Gastrocnemius medialis (tissue), 4 donors: ENCODE measurements at regions of chr1 and their contacts with region 1.

Region 1: GRCh38 chr1:165827268-165828102 is at the start of gene UCK2:
- DNase-seq: peak; percentile 72 to 81
- ATAC-seq: peak; percentile 82 to 86
- H3K4me3 ChIP-seq: peak within 1 kb of the TSS; percentile 78 to 99 (median 85)
- H3K27ac ChIP-seq: peak within 1 kb of the TSS; percentile 87 to 97 (median 96)
- H3K4me1 ChIP-seq: peaks cover 8 to 9% of the 10 kb centered on the region in 2 donors
- H3K27me3 ChIP-seq: no peaks in the 10 kb centered on the region
- CTCF ChIP-seq: peak in 4 of 5 experiments; percentile 15 to 45 (median 30)
- POLR2A ChIP-seq: peak; percentile 86 to 91
- total RNA-seq, gene UCK2: 14.0 to 32.7 (median 24.1) TPM

Region 2: GRCh38 chr1:165383067-165383466 is 444.4 kb before region 1 on chr1:
- in situ Hi-C with region 1: no loop called
- intact Hi-C with region 1: loop called (anchors 10 kb)
- DNase-seq: peak; percentile 88 to 90
- ATAC-seq: peak; percentile 98 to 99
- H3K4me3 ChIP-seq: no peak overlapping the region
- H3K27ac ChIP-seq: peak overlapping the region; percentile 59 to 73 (median 66)
- H3K4me1 ChIP-seq: peaks cover 8 to 12% of the 10 kb centered on the region in 2 donors
- H3K27me3 ChIP-seq: no peaks in the 10 kb centered on the region
- CTCF ChIP-seq: no peak
- POLR2A ChIP-seq: no peak

Region 3: GRCh38 chr1:165697881-165698760 is 129.4 kb before region 1 on chr1 and contains the start of gene ALDH9A1:
- in situ Hi-C with region 1: no loop called
- intact Hi-C with region 1: loop called (anchors 5 kb)
- DNase-seq: peak; percentile 68 to 87
- ATAC-seq: peak; percentile 90 to 92
- H3K4me3 ChIP-seq: peak within 1 kb of the TSS; percentile 91 to 96 (median 94)
- H3K27ac ChIP-seq: peak within 1 kb of the TSS; percentile 97 to 98 (median 98)
- H3K4me1 ChIP-seq: peaks cover 18 to 27% of the 10 kb centered on the region in 2 donors
- H3K27me3 ChIP-seq: no peaks in the 10 kb centered on the region
- CTCF ChIP-seq: peak in 2 of 5 experiments; percentile 49 to 52
- POLR2A ChIP-seq: peak; percentile 75 to 90
- total RNA-seq, gene ALDH9A1: 46.4 to 91.5 (median 63.3) TPM

Region 4: GRCh38 chr1:165768513-165769394 is 58.7 kb before region 1 on chr1 and contains the start of gene TMCO1:
- in situ Hi-C with region 1: no loop called
- intact Hi-C with region 1: loop called (anchors 5 kb)
- DNase-seq: peak; percentile 96 to 97
- ATAC-seq: peak; percentile 100
- H3K4me3 ChIP-seq: peak within 1 kb of the TSS; percentile 60 to 95 (median 86)
- H3K27ac ChIP-seq: peak within 1 kb of the TSS; percentile 86 to 90 (median 86)
- H3K4me1 ChIP-seq: peaks cover 23 to 33% of the 10 kb centered on the region in 2 donors
- H3K27me3 ChIP-seq: no peaks in the 10 kb centered on the region
- CTCF ChIP-seq: peak; percentile 22 to 34 (median 33)
- POLR2A ChIP-seq: peak; percentile 57 to 68
- total RNA-seq, gene TMCO1: 28.7 to 46.9 (median 36.8) TPM

Region 5: DNA sequence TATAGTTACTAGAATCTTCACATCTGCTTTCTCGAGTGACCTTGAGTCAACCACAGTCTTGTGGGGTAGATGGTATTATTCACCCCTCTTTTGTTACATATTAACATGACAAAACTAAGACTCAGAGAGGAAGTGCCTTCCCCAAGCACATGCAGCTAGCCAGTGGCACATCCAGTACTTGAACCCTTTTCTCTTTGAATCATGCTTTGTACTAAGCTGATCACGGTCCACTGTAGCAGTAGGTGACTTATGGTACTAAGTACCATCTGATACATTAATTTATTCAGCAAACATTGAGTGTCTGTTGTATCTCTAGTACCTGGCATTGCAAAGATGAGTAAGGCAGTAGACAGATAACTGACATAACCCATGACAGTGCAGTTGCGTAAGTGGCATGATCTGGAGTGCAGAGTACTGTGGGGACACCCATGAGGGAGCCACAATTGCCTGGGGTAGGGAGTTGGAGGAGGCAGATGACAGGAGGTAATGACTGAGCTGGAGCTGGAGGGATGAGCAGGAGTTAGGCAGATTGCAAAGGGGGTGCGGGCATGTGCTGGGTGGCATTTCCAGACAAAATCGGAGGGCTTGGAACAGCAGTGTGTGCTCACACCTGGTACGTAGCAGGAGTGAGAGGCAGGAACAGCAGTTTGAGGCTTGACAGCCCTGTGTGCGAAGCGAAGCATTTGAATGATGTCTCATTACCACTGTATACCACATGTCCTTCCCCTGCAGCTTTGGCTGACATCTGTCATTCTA is 29.7 kb after region 1 on chr1:
- in situ Hi-C with region 1: no loop called
- intact Hi-C with region 1: loop called (anchors 2 kb)
- DNase-seq: peak; percentile 69 to 77
- ATAC-seq: peak; percentile 85 to 90
- H3K4me3 ChIP-seq: no peak overlapping the region
- H3K27ac ChIP-seq: peak overlapping the region; percentile 76 to 80 (median 78)
- H3K4me1 ChIP-seq: peaks cover 71 to 73% of the 10 kb centered on the region in 2 donors
- H3K27me3 ChIP-seq: no peaks in the 10 kb centered on the region
- CTCF ChIP-seq: no peak
- POLR2A ChIP-seq: no peak

Region 6: GRCh38 chr1:165898837-165899236 is 71.4 kb after region 1 on chr1:
- in situ Hi-C with region 1: loop called in 2 of 4 experiments (anchors 10 kb)
- intact Hi-C with region 1: loop called (anchors 1 kb)
- DNase-seq: peak in 1 of 2 donors; percentile 35
- ATAC-seq: peak; percentile 36 to 41
- H3K4me3 ChIP-seq: no peak overlapping the region
- H3K27ac ChIP-seq: peak overlapping the region; percentile 13 to 87 (median 33)
- H3K4me1 ChIP-seq: peaks cover 18 to 28% of the 10 kb centered on the region in 2 donors
- H3K27me3 ChIP-seq: no peaks in the 10 kb centered on the region
- CTCF ChIP-seq: no peak
- POLR2A ChIP-seq: peak in 1 of 2 donors; percentile 26

Region 7: GRCh38 chr1:166017395-166017794 is 189.9 kb after region 1 on chr1:
- in situ Hi-C with region 1: no loop called
- intact Hi-C with region 1: no loop called
- DNase-seq: no peak
- ATAC-seq: no peak
- H3K4me3 ChIP-seq: no peak overlapping the region
- H3K27ac ChIP-seq: no peak overlapping the region
- H3K4me1 ChIP-seq: no peaks in the 10 kb centered on the region
- H3K27me3 ChIP-seq: no peaks in the 10 kb centered on the region
- CTCF ChIP-seq: no peak
- POLR2A ChIP-seq: no peak